ENCODE measurements at regions of chr9 and their contacts with region 1.

Region 1: GRCh38 chr9:126860757-126861466 is 473 bp downstream of the ZBTB34 start:
- DNase-seq: peak; percentile 33
- H3K4me3 ChIP-seq: peak overlapping the region; percentile 65 to 84 (median 71)
- H3K27ac ChIP-seq: peak overlapping the region; percentile 62
- H3K4me1 ChIP-seq: peaks cover 14% of the 10 kb centered on the region
- H3K27me3 ChIP-seq: no peaks in the 10 kb centered on the region
- CTCF ChIP-seq: no peak

Region 2: DNA sequence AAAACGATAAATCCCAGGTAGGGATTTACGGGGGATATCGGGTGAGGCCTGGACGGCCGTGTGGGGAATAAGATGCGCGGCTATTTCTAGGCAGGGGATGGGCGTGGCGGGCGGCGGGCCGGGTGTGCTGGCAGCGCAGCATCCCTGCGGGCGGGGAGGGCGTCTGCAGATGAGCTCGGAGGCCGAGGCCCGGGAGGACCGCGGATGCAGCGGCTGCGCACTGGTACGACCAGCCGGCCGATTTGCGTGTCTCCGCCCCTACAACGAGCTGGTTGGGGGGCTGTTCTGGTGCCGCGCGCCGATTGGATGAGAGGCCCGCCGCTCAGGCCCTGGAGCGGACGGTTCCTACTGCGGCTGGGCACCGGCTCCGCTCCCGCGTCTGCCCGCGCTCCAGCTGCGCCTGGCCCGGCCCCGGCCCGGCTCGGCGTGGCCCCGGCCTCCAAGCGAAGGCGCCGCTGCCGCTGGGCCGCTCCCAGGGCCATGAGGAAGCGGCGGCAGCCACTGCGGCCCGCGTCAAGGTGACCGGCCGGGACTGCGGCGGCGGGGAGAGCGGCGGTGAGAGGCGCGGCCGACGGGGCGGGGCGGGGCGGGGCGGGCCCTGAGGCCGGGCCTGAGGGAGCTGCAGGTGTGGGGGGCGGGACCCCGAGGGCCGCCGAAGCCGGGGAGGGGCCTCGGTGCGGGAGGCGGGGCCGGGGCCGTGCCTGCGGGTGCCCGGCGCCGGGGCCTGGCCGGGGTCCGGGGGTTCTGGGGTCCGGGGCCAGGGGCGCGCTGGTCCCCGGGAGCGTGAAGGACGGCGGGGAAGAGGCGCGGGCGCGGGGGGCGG is 53.8 kb after region 1 on chr9 and contains the start of gene RALGPS1:
- CTCF ChIA-PET with region 1: interaction called, 3 read pairs
- dilution Hi-C with region 1: no loop called
- in situ Hi-C with region 1: no loop called
- intact Hi-C with region 1: loop called (anchors 1 kb)
- DNase-seq: peak; percentile 94
- H3K4me3 ChIP-seq: peak within 1 kb of the TSS in 2 of 3 experiments; percentile 46 to 58
- H3K27ac ChIP-seq: no peak within 1 kb of the TSS
- H3K4me1 ChIP-seq: peaks cover 11% of the 10 kb centered on the region
- H3K27me3 ChIP-seq: no peaks in the 10 kb centered on the region
- CTCF ChIP-seq: no peak
- total RNA-seq, gene RALGPS1: 0.83 to 0.94 TPM